ENCODE measurements at regions of chr10 and their contacts with region 1.

Region 1: DNA sequence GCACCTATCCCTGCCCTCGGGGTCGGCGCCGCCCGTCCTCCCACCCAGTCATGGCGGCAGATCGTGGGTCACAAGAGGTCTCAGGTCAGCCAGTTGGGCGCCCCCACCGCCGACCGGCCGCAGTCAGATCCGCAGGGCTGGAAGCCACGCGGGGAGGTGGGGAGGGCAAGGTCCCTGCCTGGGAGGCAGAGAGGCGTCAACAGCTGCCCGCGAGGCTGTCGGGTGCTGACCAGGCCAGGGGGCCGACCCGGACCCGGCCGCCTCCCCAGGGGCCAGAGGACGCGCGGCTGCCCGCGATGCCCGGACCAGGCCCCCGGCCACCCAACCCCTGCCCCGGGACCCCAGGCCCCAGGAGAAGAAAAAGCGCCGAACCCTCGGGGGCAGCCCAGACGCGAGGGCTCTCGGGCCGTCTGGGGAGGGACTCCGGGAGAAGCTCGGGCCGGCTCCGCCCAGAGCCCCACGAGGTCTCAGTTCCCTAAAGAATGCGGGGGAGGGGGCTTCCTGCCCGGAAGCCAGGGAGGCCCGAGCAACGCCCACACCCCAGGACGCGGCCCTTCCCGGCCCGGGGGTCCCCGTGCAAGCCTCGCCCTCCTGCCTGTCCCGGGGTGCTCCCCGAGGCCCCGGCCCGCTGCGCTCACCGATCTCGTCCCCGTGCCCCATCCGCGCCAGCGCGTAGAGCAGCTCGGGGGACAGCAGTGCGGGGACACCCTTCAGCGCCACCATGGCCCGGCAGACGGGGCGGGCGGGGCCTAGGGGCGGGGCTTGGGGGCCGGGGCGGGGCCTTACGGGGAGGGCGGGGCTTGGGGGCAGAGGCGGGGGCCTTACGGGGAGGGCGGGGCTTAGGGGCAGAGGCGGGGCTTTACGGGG is at the start of gene FUOM:
- DNase-seq: peak; percentile 62 to 85 (median 74)
- ATAC-seq: peak; percentile 88 to 91
- H3K4me3 Mint-ChIP-seq: peak within 1 kb of the TSS; percentile 62 to 87 (median 74)
- H3K27ac Mint-ChIP-seq: peak within 1 kb of the TSS in 7 of 10 donors; percentile 24 to 81 (median 62)
- H3K4me1 Mint-ChIP-seq: peaks cover 3 to 16% (median 8%) of the 10 kb centered on the region in 4 donors
- H3K27me3 Mint-ChIP-seq: no peaks in the 10 kb centered on the region
- polyA plus RNA-seq, gene FUOM: 17.4 to 21.4 (median 18.2) TPM

Region 2: DNA sequence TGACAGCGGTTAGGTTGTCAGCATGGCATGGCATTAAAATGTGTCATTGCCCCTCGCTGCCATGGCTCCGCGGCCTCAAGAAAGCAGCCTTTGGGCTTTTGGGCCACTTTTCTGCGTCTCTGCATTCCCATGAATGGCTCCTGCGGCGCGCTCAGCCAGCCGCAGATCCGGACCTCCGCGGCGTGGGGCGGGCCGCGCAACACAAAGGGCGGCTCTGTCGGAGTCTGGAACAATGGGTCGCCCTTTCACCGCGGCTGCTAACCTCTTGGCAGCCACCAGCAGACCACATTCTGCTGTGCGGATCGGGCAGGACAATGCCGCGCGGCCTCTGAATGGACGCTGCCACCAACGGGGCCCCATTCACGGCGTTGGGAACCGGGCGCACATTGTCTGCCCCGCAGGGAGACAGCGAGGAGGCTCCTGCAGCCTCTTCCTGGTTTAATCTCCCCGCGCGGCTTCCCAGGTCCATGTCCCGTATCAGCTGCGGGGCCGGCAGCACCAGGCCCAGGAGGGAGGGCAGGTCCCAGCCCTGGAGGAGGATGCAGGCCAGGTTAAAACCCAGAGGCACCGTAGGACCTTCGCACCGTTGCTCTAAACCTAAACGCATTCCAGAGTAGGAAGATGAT is 643.3 kb before region 1 on chr10:
- POLR2A ChIA-PET with region 1: no interaction called
- DNase-seq: peak in 1 of 10 donors; percentile 6
- ATAC-seq: no peak
- H3K4me3 Mint-ChIP-seq: no peak overlapping the region
- H3K27ac Mint-ChIP-seq: no peak overlapping the region
- H3K4me1 Mint-ChIP-seq: peaks cover 0 to 8% (median under 1%) of the 10 kb centered on the region in 4 donors
- H3K27me3 Mint-ChIP-seq: no peaks in the 10 kb centered on the region

Region 3: DNA sequence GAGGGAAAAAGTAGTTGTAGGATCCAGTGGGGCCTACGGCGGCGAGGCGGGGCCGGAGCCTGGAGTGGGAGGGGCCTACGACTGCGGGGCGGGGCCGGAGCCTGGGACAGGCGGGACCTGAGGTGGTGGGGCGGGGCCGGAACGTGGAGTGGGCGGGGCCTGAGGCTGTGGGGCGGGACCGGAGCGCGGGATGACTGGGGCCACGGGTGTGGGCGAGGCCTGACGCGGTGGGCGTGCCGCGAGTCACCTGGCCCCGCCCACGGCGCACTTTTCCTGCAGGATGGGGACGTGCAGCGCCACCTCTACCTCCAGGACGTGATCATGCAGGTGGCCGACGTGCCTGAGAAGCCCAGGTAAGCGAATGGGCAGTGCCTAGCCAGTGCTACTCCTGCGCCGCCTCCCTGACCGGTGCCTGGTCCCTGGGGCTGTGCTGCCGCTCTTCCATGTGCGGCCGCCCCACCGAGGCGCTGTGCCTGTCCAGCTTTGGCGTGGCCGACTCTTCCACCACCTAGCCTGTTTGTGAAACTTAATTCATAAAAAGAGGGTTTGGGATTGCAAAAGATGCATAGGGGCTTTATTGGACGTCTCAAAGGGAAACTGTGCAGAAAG is 48.3 kb before region 1 on chr10:
- POLR2A ChIA-PET with region 1: no interaction called
- DNase-seq: peak in 9 of 10 donors; percentile 82 to 96 (median 95)
- ATAC-seq: peak; percentile 65 to 69
- H3K4me3 Mint-ChIP-seq: peak overlapping the region; percentile 69 to 94 (median 77)
- H3K27ac Mint-ChIP-seq: peak overlapping the region; percentile 19 to 100 (median 92)
- H3K4me1 Mint-ChIP-seq: peaks cover 15 to 41% (median 35%) of the 10 kb centered on the region in 4 donors
- H3K27me3 Mint-ChIP-seq: peaks cover 0 to 5% (median 0%) of the 10 kb centered on the region in 5 donors

Region 4: DNA sequence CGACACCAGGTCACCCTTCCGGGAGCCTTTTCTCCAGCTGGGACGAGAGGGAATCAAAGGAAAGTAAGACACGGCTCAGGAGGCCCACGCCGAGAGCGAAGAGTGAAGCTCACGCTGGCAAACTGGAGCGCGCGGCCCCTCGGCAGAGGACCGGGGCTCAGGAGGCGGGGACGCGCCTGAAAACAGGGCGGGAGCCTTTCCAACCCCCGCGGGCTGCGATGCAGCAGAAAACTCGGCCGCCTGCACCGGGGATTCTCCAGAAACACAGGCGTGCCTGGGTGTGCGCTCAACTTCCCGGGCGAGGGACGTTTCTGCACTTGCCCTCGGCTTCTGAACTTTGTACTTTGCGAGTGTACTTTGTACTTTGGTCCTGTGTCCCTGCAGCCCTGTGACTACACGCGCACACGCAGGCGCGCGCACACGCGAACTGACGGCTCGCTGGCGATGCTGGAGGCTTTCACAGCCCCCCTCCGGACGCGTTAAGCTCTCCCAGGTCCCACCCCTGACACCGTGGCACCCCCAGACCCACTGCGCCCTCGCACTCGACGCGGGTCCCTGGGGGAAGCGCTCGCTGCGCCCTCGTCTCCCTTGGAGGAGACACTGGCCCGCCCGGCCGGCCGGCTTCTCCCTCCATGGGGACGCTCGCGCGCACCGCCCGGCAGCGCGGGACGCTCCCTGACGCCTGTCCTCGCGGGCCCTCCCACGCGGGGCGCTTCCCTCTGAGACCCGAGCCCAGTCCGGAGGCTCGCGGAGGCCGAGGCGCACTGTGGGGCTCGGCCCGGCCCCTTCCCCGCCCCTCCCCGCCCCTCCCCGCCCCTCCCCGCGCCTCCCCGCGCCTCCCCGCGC is 21.0 kb after region 1 on chr10:
- POLR2A ChIA-PET with region 1: interaction called, 11 read pairs
- DNase-seq: peak; percentile 37 to 72 (median 54)
- ATAC-seq: peak; percentile 57 to 69
- H3K4me3 Mint-ChIP-seq: peak overlapping the region; percentile 71 to 92 (median 85)
- H3K27ac Mint-ChIP-seq: peak overlapping the region in 7 of 10 donors; percentile 31 to 90 (median 73)
- H3K4me1 Mint-ChIP-seq: peaks cover 2 to 38% (median 13%) of the 10 kb centered on the region in 4 donors
- H3K27me3 Mint-ChIP-seq: no peaks in the 10 kb centered on the region